ENCODE measurements at regions of chr17 and their contacts with region 1.

Region 1: GRCh38 chr17:8745586-8746500 is 1.2 kb upstream of the CCDC42 start:
- DNase-seq: peak in 8 of 10 donors; percentile 24 to 76 (median 64)
- H3K4me3 ChIP-seq: peak overlapping the region; percentile 45 to 82 (median 70)
- H3K27ac ChIP-seq: peak overlapping the region in 9 of 59 donors; percentile 6 to 75 (median 45)
- H3K27me3 ChIP-seq: peaks cover 0 to 8% (median 0%) of the 10 kb centered on the region in 45 donors
- CTCF ChIP-seq: peak; percentile 80 to 99 (median 94)

Region 2: GRCh38 chr17:8337802-8338752 is 407.8 kb before region 1 on chr17:
- intact Hi-C with region 1: no loop called
- DNase-seq: no peak
- H3K4me3 ChIP-seq: peak overlapping the region in 43 of 59 donors; percentile 1 to 56 (median 27)
- H3K27ac ChIP-seq: peak overlapping the region in 11 of 59 donors; percentile 2 to 53 (median 21)
- H3K27me3 ChIP-seq: no peaks in the 10 kb centered on the region
- CTCF ChIP-seq: no peak

Region 3: GRCh38 chr17:8409966-8410864 is 335.6 kb before region 1 on chr17:
- intact Hi-C with region 1: loop called (anchors 1 to 2 kb)
- DNase-seq: peak; percentile 74 to 93 (median 86)
- H3K4me3 ChIP-seq: peak overlapping the region in 3 of 59 donors; percentile 2 to 11 (median 3)
- H3K27ac ChIP-seq: no peak overlapping the region
- H3K27me3 ChIP-seq: peaks cover 0 to 15% (median 0%) of the 10 kb centered on the region in 45 donors
- CTCF ChIP-seq: peak; percentile 84 to 98 (median 92)

Region 4: GRCh38 chr17:8708025-8708461 is 37.8 kb before region 1 on chr17:
- intact Hi-C with region 1: no loop called
- DNase-seq: no peak
- H3K4me3 ChIP-seq: no peak overlapping the region
- H3K27ac ChIP-seq: peak overlapping the region in 1 of 59 donors; percentile 27
- H3K27me3 ChIP-seq: peaks cover 0 to 3% (median 0%) of the 10 kb centered on the region in 45 donors
- CTCF ChIP-seq: no peak

Measured in dorsolateral prefrontal cortex (tissue), 120 donors.